MCF 10A (cell line): ENCODE measurements at regions of chr6 and their contacts with region 1.

Region 1: DNA sequence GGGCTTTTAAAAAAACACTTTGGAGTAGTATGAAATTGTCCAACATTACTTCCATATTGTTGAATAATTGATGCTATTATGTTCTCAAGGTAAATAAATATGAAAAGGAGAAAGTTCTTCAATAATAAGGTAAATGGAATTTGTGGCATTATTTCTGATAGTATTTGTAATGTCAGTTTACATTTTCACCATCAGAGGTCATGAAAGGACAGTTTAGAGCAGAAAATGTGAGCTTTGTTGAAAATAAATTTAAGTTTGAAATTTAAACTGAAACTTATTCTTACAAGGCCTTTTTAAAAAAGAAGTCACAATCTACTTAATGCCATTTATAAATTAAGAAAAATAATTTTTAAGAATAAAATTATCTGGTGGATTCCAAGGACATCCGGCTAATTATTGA is 15.8 kb upstream of the CEP162 start:
- DNase-seq: no peak
- H3K4me3 Mint-ChIP-seq: no peak overlapping the region
- H3K27ac Mint-ChIP-seq: no peak overlapping the region
- H3K4me1 Mint-ChIP-seq: no peaks in the 10 kb centered on the region
- H3K27me3 Mint-ChIP-seq: no peaks in the 10 kb centered on the region
- CTCF ChIP-seq: peak; percentile 27

Region 2: GRCh38 chr6:84137051-84137375 is 106.2 kb before region 1 on chr6:
- CTCF ChIA-PET with region 1: no interaction called
- POLR2A ChIA-PET with region 1: no interaction called
- intact Hi-C with region 1: no loop called
- DNase-seq: peak; percentile 59
- H3K4me3 Mint-ChIP-seq: no peak overlapping the region
- H3K27ac Mint-ChIP-seq: no peak overlapping the region
- H3K4me1 Mint-ChIP-seq: no peaks in the 10 kb centered on the region
- H3K27me3 Mint-ChIP-seq: no peaks in the 10 kb centered on the region
- CTCF ChIP-seq: no peak

Region 3: DNA sequence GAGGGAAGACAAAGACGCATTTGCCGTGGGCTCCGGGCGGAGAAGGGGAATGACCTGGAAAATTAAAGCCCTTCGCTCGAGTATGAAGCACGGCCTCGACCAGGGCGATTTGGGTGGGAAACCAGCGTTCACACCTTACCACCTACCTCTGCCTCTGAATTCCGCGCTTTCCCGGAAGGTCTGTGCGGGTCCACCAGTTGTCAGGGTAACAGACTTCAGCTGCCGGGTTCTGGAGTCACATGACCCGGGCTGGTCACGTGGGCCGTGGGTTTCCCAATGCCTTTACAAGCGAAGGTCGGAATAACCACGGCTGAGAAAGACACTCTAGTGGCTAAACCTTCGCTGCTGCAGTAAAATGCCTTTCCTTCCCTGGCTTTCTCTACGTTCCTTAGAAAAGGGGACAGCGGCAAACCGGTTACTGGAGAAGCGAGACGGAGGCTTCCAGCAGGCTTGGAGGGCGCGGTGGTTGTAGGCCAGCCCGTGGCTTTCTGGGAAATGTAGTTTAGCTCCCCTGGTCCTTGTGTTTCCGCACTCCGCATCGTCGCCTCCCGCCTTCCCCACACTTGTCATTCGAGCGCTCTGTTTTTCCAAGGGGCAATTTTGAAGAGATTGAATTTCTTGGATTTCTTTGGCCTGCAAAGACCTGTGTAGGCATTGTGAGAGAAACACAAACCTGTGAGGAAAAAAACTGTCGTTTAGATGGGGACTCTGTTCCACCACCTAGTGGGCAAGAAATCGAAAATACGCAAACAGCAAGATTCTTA is 15.6 kb before region 1 on chr6 and contains the start of gene CEP162:
- CTCF ChIA-PET with region 1: interaction called, 15 read pairs
- POLR2A ChIA-PET with region 1: no interaction called
- intact Hi-C with region 1: no loop called
- DNase-seq: peak; percentile 87
- H3K4me3 Mint-ChIP-seq: peak within 1 kb of the TSS; percentile 94
- H3K27ac Mint-ChIP-seq: peak within 1 kb of the TSS; percentile 72
- H3K4me1 Mint-ChIP-seq: peaks cover 13% of the 10 kb centered on the region
- H3K27me3 Mint-ChIP-seq: peaks cover 18% of the 10 kb centered on the region
- CTCF ChIP-seq: peak; percentile 75
- total RNA-seq, gene CEP162: 2.4 and 2.9 TPM in 2 replicates

Region 4: GRCh38 chr6:84263557-84263956 is 20.3 kb after region 1 on chr6:
- CTCF ChIA-PET with region 1: no interaction called
- POLR2A ChIA-PET with region 1: no interaction called
- intact Hi-C with region 1: no loop called
- DNase-seq: peak; percentile 34
- H3K4me3 Mint-ChIP-seq: no peak overlapping the region
- H3K27ac Mint-ChIP-seq: no peak overlapping the region
- H3K4me1 Mint-ChIP-seq: peaks cover 15% of the 10 kb centered on the region
- H3K27me3 Mint-ChIP-seq: no peaks in the 10 kb centered on the region
- CTCF ChIP-seq: no peak

Region 5: DNA sequence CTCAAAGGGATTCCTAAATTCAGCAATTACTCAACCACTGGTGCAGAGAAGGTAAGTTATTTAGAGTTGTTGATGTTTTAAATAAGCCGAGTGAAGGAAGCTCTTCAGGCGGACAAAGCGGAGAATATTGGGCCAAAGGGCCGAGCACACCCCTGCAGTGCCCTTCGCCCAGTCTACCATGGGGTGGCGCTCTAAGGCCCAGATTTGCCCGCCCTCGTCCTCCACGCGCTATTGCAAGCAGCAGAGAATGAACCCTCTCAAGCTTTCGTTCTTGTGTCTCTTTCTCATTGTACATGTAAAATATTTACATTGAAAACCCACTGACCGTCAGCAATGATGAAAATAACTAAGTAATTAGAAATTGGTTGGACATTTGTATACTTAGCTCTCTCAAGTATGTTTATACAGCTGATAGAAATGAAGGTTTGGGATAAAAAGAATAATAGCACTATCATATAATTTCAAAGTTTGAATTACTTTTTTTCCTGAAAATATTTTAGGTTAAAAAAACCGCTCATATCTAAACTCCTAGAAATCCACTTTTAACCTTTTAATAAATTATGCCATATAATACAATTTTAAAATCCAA is 179.2 kb after region 1 on chr6:
- CTCF ChIA-PET with region 1: interaction called, 4 read pairs
- POLR2A ChIA-PET with region 1: no interaction called
- intact Hi-C with region 1: loop called (anchors 1 kb)
- DNase-seq: peak; percentile 67
- H3K4me3 Mint-ChIP-seq: no peak overlapping the region
- H3K27ac Mint-ChIP-seq: no peak overlapping the region
- H3K4me1 Mint-ChIP-seq: no peaks in the 10 kb centered on the region
- H3K27me3 Mint-ChIP-seq: no peaks in the 10 kb centered on the region
- CTCF ChIP-seq: peak; percentile 78

Region 6: GRCh38 chr6:85015396-85015990 is 772.3 kb after region 1 on chr6:
- CTCF ChIA-PET with region 1: no interaction called
- POLR2A ChIA-PET with region 1: no interaction called
- intact Hi-C with region 1: loop called (anchors 1 kb)
- DNase-seq: peak; percentile 64
- H3K4me3 Mint-ChIP-seq: no peak overlapping the region
- H3K27ac Mint-ChIP-seq: no peak overlapping the region
- H3K4me1 Mint-ChIP-seq: no peaks in the 10 kb centered on the region
- H3K27me3 Mint-ChIP-seq: no peaks in the 10 kb centered on the region
- CTCF ChIP-seq: peak; percentile 65